ENCODE measurements at regions of chr6 and their contacts with region 1.

Region 1: GRCh38 chr6:56364827-56365313 is 117.5 kb upstream of the COL21A1 start:
- DNase-seq: no peak
- ATAC-seq: no peak
- H3K4me3 ChIP-seq: no peak overlapping the region
- H3K27ac ChIP-seq: no peak overlapping the region
- H3K4me1 ChIP-seq: peaks cover 3 to 15% of the 10 kb centered on the region in 2 donors
- H3K27me3 ChIP-seq: no peaks in the 10 kb centered on the region
- CTCF ChIP-seq: no peak
- POLR2A ChIP-seq: no peak

Region 2: GRCh38 chr6:55782275-55782674 is 582.6 kb before region 1 on chr6:
- in situ Hi-C with region 1: no loop called
- intact Hi-C with region 1: no loop called
- DNase-seq: no peak
- ATAC-seq: no peak
- H3K4me3 ChIP-seq: no peak overlapping the region
- H3K27ac ChIP-seq: no peak overlapping the region
- H3K4me1 ChIP-seq: no peaks in the 10 kb centered on the region
- H3K27me3 ChIP-seq: no peaks in the 10 kb centered on the region
- CTCF ChIP-seq: no peak
- POLR2A ChIP-seq: no peak

Region 3: GRCh38 chr6:56387621-56388394 is 22.9 kb after region 1 on chr6:
- in situ Hi-C with region 1: no loop called
- intact Hi-C with region 1: no loop called
- DNase-seq: no peak
- ATAC-seq: no peak
- H3K4me3 ChIP-seq: no peak overlapping the region
- H3K27ac ChIP-seq: no peak overlapping the region
- H3K4me1 ChIP-seq: no peaks in the 10 kb centered on the region
- H3K27me3 ChIP-seq: no peaks in the 10 kb centered on the region
- CTCF ChIP-seq: no peak
- POLR2A ChIP-seq: no peak

Region 4: DNA sequence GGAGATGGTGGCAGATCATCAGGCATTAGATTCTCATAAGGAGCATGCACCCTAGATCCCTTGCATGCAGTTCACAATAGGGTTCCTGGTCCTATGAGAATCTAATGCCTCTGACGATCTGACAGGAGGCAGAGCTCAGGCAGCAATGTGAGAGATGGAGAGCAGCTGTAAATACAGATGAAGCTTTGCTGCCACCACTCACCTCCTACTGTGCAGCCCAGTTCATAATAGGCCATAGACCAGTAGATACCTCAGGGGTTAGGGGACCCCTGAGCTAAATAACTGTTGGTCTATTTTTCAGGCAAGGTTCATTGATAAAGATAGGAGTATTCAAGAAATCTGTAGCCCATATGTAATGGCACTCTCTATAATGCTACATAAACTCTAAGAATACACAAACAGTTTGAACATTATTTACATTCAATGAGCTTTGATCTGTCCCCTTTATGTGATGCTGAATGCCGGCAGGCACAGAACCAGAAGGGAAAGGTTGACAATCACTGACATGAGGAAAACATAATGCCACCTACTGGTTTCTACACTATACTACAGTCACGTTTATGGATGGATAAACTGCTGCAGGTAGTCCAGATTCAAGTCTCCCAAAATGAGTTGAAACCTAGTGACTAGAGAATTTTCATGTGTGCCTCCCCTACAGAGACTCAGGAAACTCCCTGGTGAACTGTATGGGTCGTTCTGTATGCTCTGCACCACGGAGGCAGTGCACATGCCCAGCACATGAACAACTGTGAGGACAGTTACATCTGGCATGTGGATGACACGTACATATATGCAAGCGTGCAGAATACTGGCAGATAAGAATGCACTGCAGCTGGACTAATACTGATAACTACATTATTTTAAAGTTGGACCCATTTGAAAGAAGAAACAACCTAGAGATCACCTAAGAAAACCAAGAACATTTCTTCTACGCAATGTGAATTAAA is 205.8 kb after region 1 on chr6:
- in situ Hi-C with region 1: loop called in 1 of 4 experiments (anchors 10 kb)
- intact Hi-C with region 1: no loop called
- DNase-seq: no peak
- ATAC-seq: peak in 1 of 2 donors; percentile 56
- H3K4me3 ChIP-seq: no peak overlapping the region
- H3K27ac ChIP-seq: no peak overlapping the region
- H3K4me1 ChIP-seq: no peaks in the 10 kb centered on the region
- H3K27me3 ChIP-seq: no peaks in the 10 kb centered on the region
- CTCF ChIP-seq: peak in 4 of 5 experiments; percentile 23 to 58 (median 45)
- POLR2A ChIP-seq: no peak

Region 5: DNA sequence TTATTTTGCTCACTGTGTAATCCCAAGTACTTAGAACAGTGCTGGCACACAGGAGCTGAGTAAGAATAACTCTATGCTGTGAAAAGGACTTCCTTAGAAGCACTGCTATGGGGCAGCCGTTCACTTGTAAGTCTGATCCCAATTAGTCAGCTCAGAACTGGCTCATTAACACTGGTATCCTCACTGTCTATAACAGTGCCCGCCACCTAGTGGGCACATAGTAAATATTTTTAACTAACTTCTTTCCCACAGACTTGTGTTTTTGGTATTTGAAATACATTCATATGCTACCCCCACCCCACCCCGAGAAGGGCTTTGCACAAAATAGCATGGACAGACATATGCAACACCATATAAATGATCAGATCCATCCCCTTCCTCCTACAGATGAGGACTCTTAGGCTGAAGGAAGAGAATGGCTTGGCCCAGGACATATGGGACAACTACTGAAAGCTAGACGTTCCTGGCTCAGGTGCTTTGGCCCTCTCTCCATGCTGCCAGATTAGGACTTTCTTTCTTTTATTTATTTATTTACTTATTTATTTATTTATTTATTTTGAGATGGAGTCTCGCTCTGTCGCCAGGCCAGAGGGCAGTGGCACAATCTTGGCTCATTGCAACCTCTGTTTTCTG is 230.7 kb after region 1 on chr6:
- in situ Hi-C with region 1: loop called in 2 of 4 experiments (anchors 5 to 10 kb)
- intact Hi-C with region 1: no loop called
- DNase-seq: no peak
- ATAC-seq: no peak
- H3K4me3 ChIP-seq: no peak overlapping the region
- H3K27ac ChIP-seq: no peak overlapping the region
- H3K4me1 ChIP-seq: no peaks in the 10 kb centered on the region
- H3K27me3 ChIP-seq: no peaks in the 10 kb centered on the region
- CTCF ChIP-seq: peak in 4 of 5 experiments; percentile 22 to 62 (median 47)
- POLR2A ChIP-seq: no peak

Measured in gastrocnemius medialis (tissue), 4 donors.